ENCODE measurements at regions of chr16 and their contacts with region 1.

Region 1: GRCh38 chr16:649624-650023 is 459 bp downstream of the WDR90 start:
- DNase-seq: peak in 1 of 6 donors; percentile 77
- ATAC-seq: peak in 2 of 4 donors; percentile 0 to 1
- H3K4me3 ChIP-seq: peak overlapping the region; percentile 59 to 86 (median 70)
- H3K27ac ChIP-seq: peak overlapping the region in 2 of 4 donors; percentile 74 to 91
- H3K4me1 ChIP-seq: peaks cover 18 to 29% (median 27%) of the 10 kb centered on the region in 3 donors
- H3K27me3 ChIP-seq: no peaks in the 10 kb centered on the region
- CTCF ChIP-seq: no peak

Region 2: DNA sequence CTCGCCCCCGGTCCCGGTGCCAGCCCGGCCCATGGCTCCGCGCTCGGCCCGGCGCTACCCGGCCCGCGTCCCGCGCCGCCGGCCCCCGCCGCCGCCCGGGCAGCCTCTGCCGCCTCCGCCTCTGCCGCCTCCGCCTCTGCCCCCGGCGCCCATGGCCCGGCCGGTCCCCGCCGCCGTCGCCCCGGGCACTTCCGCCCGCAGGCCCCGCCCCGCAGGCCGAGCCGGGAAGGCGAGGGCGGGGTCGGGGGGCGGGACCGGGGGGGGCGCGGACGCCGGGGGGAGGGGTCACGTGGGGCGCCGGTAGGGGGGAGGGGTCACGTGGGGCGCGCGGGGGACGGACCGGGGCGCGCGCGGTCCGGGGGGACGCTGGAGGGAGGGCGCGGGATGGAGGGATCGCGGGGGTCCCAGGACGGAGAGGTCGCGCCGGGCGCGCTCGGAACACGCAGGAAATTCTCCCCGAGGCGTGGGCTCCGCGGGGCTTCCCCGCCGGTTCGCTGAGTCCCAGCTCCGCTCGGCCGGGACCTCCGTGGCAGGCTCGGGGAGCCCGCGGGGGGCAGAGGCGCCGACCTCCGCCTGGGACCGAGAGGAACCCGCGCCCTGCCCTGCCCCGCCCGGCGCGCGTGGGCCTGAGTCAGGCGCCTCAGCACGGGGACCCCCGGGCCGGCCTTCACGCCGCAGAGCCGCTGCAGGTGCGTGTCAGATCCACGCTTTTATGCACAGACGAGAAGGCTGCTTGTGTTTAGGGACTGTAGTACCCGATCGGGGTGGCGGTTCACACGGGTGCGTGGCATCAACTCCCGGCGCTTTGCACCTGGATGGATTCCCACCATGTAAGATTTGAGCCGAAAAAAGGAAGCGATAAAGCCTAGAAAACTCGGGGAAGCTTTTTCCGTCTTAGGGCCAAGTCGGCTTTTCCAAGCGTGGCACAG is 267.6 kb before region 1 on chr16 and contains the start of gene PGAP6:
- intact Hi-C with region 1: loop called in 1 of 3 experiments (anchors 10 kb)
- DNase-seq: peak in 5 of 6 donors; percentile 65 to 87 (median 82)
- ATAC-seq: peak; percentile 19 to 52 (median 24)
- H3K4me3 ChIP-seq: peak within 1 kb of the TSS; percentile 88 to 95 (median 90)
- H3K27ac ChIP-seq: peak within 1 kb of the TSS; percentile 84 to 95 (median 91)
- H3K4me1 ChIP-seq: peaks cover 9 to 21% (median 17%) of the 10 kb centered on the region in 3 donors
- H3K27me3 ChIP-seq: no peaks in the 10 kb centered on the region
- CTCF ChIP-seq: no peak
- total RNA-seq, gene PGAP6: 53.1 to 75.5 (median 58.9) TPM

Measured in pancreas (tissue), 10 donors.